Panc1 (cell line): ENCODE measurements at regions of chr19 and their contacts with region 1.

Region 1: DNA sequence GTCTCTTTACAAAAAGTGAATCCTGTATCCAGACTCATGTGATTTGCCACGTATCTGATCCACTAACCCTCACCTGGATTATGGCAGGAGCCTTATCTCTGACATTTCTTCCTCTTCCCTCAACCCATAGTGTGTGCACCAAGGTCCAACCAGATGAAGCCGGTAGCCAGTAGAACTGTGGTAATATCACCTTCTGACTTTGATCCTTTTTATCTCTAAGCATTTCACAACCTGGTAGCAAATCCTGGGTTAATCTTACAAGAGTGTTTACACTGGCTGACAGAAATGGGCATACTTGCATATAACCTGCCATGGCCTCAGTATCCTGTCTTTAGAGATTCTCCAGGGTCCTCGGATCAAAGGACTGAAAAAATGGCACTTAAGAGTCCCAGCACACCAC is 1.9 kb downstream of the ZNF417 start:
- DNase-seq: no peak
- ATAC-seq: no peak
- H3K4me3 ChIP-seq: no peak overlapping the region
- H3K27ac ChIP-seq: no peak overlapping the region
- H3K4me1 ChIP-seq: no peaks in the 10 kb centered on the region; the same call in 1 of the 2 replicates
- H3K27me3 ChIP-seq: no peaks in the 10 kb centered on the region
- CTCF ChIP-seq: no peak

Region 2: GRCh38 chr19:57786291-57786690 is 128.2 kb before region 1 on chr19:
- CTCF ChIA-PET with region 1: interaction called, 15 read pairs
- POLR2A ChIA-PET with region 1: no interaction called
- in situ Hi-C with region 1: no loop called
- intact Hi-C with region 1: no loop called
- DNase-seq: no peak
- ATAC-seq: no peak
- H3K4me3 ChIP-seq: no peak overlapping the region
- H3K27ac ChIP-seq: no peak overlapping the region
- H3K4me1 ChIP-seq: no peaks in the 10 kb centered on the region
- H3K27me3 ChIP-seq: no peaks in the 10 kb centered on the region
- CTCF ChIP-seq: no peak

Region 3: DNA sequence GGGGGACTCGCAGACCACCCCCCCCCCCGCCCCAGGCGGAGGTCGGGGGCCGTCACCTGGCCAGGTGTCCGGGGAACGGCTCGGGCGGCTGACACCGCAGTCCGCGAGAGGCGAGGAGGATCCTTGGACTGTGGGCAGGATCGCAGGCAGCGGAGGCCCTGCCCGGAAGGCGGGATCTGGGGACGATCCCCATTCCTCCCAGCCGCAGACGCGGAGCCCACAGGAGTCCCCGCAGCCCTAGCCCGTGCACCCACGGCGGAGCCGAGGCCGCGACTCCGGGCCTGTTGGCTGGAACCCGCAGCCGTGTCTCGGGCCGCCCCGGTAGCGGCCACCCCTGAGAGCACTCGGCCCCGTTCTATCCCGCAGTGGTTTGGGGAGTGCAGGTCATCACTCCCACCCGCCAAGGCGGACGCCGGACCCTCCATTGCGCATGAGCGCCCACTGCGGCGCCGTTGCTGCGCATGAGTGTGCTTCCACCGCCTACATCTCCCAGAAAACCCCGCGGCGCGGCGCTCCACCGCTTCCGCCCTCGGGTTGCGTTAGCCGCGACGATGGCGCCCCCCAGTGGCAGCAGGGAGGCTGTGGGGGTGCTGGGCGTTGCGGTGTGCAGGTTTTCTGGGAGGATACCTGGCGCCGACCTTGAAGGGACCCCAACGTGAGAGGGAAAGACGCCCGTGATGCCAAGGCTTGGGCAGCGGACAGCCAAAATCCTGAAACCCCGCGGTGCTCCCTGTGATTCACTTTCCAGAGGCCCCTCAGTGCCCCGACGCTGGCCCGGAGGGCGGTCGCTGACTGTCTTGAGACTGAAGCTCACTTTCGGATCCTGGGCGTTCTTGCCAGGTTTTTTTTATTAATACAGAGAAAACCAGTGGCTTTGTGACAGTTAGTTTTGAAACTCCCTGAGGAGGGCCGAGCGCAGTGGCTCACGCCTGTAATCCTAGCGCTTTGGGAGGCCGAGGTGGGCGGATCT is 240.4 kb after region 1 on chr19:
- CTCF ChIA-PET with region 1: no interaction called
- POLR2A ChIA-PET with region 1: no interaction called
- in situ Hi-C with region 1: no loop called
- intact Hi-C with region 1: no loop called
- DNase-seq: peak; percentile 10
- ATAC-seq: peak; percentile 84
- H3K4me3 ChIP-seq: peak overlapping the region; percentile 53 to 55
- H3K27ac ChIP-seq: peak overlapping the region; percentile 18; the same call in 1 of the 2 replicates
- H3K4me1 ChIP-seq: no peaks in the 10 kb centered on the region
- H3K27me3 ChIP-seq: no peaks in the 10 kb centered on the region
- CTCF ChIP-seq: peak; percentile 85; the same call in 1 of the 2 replicates

Region 4: DNA sequence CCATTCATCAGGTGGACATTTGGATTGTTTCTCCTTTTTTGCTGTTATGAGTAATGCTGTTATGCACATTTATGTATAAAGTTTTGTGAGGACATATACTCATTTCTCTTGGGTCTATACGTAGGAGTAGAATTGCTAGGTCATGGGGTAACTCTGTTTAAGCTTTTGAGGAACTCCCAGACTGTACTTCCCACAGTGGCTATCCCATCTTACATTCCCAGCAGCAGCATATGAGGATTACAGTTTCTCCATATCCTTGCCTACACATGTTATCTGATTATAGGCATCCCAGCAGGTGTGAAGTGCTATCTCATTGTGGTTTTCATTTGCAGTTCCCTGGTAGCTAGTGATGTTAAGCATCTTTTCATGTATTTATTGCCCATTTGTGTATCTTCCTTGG is 418.2 kb after region 1 on chr19:
- CTCF ChIA-PET with region 1: no interaction called
- POLR2A ChIA-PET with region 1: interaction called, 17 read pairs
- in situ Hi-C with region 1: no loop called
- intact Hi-C with region 1: no loop called
- DNase-seq: no peak
- ATAC-seq: no peak
- H3K4me3 ChIP-seq: no peak overlapping the region
- H3K27ac ChIP-seq: no peak overlapping the region
- H3K4me1 ChIP-seq: peaks cover 17% of the 10 kb centered on the region
- H3K27me3 ChIP-seq: no peaks in the 10 kb centered on the region
- CTCF ChIP-seq: no peak